Naive thymus-derived CD4-positive, alpha-beta T cell (primary cell): ENCODE measurements at regions of chr19 and their contacts with region 1.

Region 1: GRCh38 chr19:1863726-1864480 is 524 bp upstream of the KLF16 start:
- DNase-seq: peak; percentile 89 to 96 (median 94)
- ATAC-seq: peak; percentile 84
- H3K4me3 ChIP-seq: peak overlapping the region; percentile 79
- H3K4me3 Mint-ChIP-seq: peak overlapping the region; percentile 38 to 82 (median 73)
- H3K27ac ChIP-seq: peak overlapping the region; percentile 78
- H3K27ac Mint-ChIP-seq: peak overlapping the region; percentile 15 to 86 (median 76)
- H3K4me1 ChIP-seq: peaks cover 13 to 32% of the 10 kb centered on the region in 2 donors
- H3K4me1 Mint-ChIP-seq: peaks cover 6 to 46% (median 32%) of the 10 kb centered on the region in 7 donors
- H3K27me3 ChIP-seq: no peaks in the 10 kb centered on the region
- H3K27me3 Mint-ChIP-seq: no peaks in the 10 kb centered on the region

Region 2: DNA sequence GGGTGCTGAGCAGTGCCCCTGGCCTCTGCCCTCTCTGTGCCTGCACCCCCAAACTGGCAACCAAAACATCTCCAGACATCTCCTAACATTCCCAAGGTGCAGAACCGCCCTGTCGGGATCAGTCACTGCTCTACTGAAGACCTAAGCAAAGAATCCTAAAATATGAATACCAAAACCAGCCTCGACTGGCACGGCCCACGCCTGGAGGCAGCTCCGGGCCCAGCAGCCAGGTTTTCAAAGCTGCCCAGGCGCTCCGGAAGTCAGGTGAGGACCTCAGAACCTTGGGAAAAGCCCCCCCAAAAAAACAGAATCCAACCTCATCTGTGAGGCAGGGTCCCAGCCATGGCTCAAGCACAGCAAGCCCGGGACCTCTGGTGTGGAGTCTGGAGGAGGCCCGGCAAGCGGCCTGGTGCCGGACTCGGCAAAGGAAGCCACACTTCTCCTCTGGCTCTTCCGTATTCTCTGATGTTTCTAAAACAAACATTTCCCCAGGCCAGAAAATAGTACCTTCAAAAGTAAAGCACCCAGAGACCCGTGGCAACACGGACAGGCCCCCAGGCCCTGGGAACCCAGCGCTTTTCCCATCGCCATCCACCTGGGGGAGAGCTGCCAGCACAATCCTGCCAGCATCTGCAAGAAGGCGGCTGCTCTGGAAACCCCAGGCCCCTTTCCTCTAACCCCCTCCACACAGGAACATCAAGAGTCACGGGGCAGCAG is 21.4 kb before region 1 on chr19:
- CTCF ChIA-PET with region 1: no interaction called
- POLR2A ChIA-PET with region 1: no interaction called
- intact Hi-C with region 1: no loop called
- DNase-seq: no peak
- ATAC-seq: no peak
- H3K4me3 ChIP-seq: no peak overlapping the region
- H3K4me3 Mint-ChIP-seq: peak overlapping the region in 5 of 10 donors; percentile 18 to 62 (median 41)
- H3K27ac ChIP-seq: no peak overlapping the region
- H3K27ac Mint-ChIP-seq: peak overlapping the region in 3 of 9 donors; percentile 34 to 48 (median 41)
- H3K4me1 ChIP-seq: peaks cover 21 to 43% of the 10 kb centered on the region in 2 donors
- H3K4me1 Mint-ChIP-seq: peaks cover 35 to 80% (median 59%) of the 10 kb centered on the region in 7 donors
- H3K27me3 ChIP-seq: no peaks in the 10 kb centered on the region
- H3K27me3 Mint-ChIP-seq: no peaks in the 10 kb centered on the region

Region 3: DNA sequence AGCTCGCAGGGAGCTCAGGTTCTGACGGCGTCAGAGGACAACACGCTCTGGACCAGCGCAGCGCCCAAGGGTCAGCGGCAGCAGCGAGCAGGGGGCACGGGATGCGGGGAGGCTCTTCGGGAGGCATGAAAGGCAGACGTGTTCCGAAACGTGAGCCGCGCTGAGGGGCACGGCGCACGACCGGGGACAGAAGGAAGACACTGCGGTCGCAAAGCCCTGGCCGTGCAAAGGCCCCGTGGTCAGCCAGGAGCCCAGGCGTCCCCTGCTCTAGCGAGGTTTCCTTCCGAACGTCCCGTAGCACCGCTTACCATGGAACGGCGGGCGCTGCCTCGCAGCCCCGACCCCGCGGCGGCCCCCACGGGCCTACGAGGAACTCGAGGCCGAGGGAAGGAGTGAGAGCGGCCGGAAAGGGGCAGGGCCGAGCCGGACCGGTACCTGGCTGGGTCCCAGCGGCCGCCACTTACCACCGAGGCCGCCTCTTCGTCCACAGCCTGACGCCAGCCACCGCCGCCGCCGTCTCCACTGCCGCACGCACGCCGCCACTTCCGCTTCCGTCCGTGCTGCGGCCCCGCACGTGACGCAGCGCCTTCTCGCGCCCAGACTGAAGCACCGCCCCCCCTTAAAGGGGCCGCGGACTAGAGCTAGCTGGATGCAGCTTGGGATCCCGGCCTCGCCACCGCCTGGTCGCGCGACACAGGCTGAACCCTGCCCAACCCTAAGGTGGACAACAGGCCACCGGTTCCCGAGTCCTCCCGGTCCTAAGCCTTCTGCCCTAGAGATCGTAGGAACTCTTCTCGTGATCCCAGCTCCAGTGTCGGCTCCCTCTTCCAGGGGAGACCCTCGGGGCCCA is 12.0 kb after region 1 on chr19:
- CTCF ChIA-PET with region 1: interaction called, 3 read pairs
- POLR2A ChIA-PET with region 1: interaction called, 40 read pairs
- intact Hi-C with region 1: loop called (anchors 1 kb)
- DNase-seq: peak; percentile 75 to 92 (median 85)
- ATAC-seq: peak; percentile 95
- H3K4me3 ChIP-seq: peak overlapping the region; percentile 83
- H3K4me3 Mint-ChIP-seq: peak overlapping the region; percentile 95 to 100 (median 98)
- H3K27ac ChIP-seq: peak overlapping the region; percentile 98
- H3K27ac Mint-ChIP-seq: peak overlapping the region; percentile 93 to 99 (median 98)
- H3K4me1 ChIP-seq: peaks cover 27 to 31% of the 10 kb centered on the region in 2 donors
- H3K4me1 Mint-ChIP-seq: peaks cover 9 to 41% (median 21%) of the 10 kb centered on the region in 7 donors
- H3K27me3 ChIP-seq: no peaks in the 10 kb centered on the region
- H3K27me3 Mint-ChIP-seq: peaks cover 0 to 2% (median 0%) of the 10 kb centered on the region in 5 donors

Region 4: GRCh38 chr19:1896508-1896907 is 32.6 kb after region 1 on chr19:
- CTCF ChIA-PET with region 1: interaction called, 8 read pairs
- POLR2A ChIA-PET with region 1: interaction called, 3 read pairs
- intact Hi-C with region 1: loop called in 1 of 2 experiments (anchors 2 kb)
- DNase-seq: no peak
- ATAC-seq: no peak
- H3K4me3 ChIP-seq: peak overlapping the region; percentile 13
- H3K4me3 Mint-ChIP-seq: peak overlapping the region; percentile 82 to 93 (median 88)
- H3K27ac ChIP-seq: peak overlapping the region; percentile 65
- H3K27ac Mint-ChIP-seq: peak overlapping the region in 7 of 9 donors; percentile 70 to 99 (median 97)
- H3K4me1 ChIP-seq: peaks cover 16 to 29% of the 10 kb centered on the region in 2 donors
- H3K4me1 Mint-ChIP-seq: peaks cover 10 to 46% (median 32%) of the 10 kb centered on the region in 7 donors
- H3K27me3 ChIP-seq: no peaks in the 10 kb centered on the region
- H3K27me3 Mint-ChIP-seq: no peaks in the 10 kb centered on the region

Region 5: GRCh38 chr19:1929021-1929742 is 65.3 kb after region 1 on chr19:
- CTCF ChIA-PET with region 1: no interaction called
- POLR2A ChIA-PET with region 1: no interaction called
- intact Hi-C with region 1: loop called in 1 of 2 experiments (anchors 1 kb)
- DNase-seq: peak; percentile 65 to 86 (median 76)
- ATAC-seq: peak; percentile 93
- H3K4me3 ChIP-seq: peak overlapping the region; percentile 36
- H3K4me3 Mint-ChIP-seq: peak overlapping the region; percentile 71 to 85 (median 80)
- H3K27ac ChIP-seq: peak overlapping the region; percentile 45
- H3K27ac Mint-ChIP-seq: peak overlapping the region in 7 of 9 donors; percentile 23 to 80 (median 32)
- H3K4me1 ChIP-seq: peaks cover 8 to 9% of the 10 kb centered on the region in 2 donors
- H3K4me1 Mint-ChIP-seq: peaks cover 6 to 27% (median 22%) of the 10 kb centered on the region in 7 donors
- H3K27me3 ChIP-seq: no peaks in the 10 kb centered on the region
- H3K27me3 Mint-ChIP-seq: no peaks in the 10 kb centered on the region

Region 6: GRCh38 chr19:1992759-1993260 is 128.9 kb after region 1 on chr19:
- CTCF ChIA-PET with region 1: no interaction called
- POLR2A ChIA-PET with region 1: no interaction called
- intact Hi-C with region 1: no loop called
- DNase-seq: no peak
- ATAC-seq: no peak
- H3K4me3 ChIP-seq: no peak overlapping the region
- H3K4me3 Mint-ChIP-seq: no peak overlapping the region
- H3K27ac ChIP-seq: no peak overlapping the region
- H3K27ac Mint-ChIP-seq: no peak overlapping the region
- H3K4me1 ChIP-seq: no peaks in the 10 kb centered on the region
- H3K4me1 Mint-ChIP-seq: peaks cover 0 to 4% (median 0%) of the 10 kb centered on the region in 7 donors
- H3K27me3 ChIP-seq: no peaks in the 10 kb centered on the region
- H3K27me3 Mint-ChIP-seq: no peaks in the 10 kb centered on the region

Region 7: GRCh38 chr19:2061495-2062381 is 197.8 kb after region 1 on chr19:
- CTCF ChIA-PET with region 1: no interaction called
- POLR2A ChIA-PET with region 1: no interaction called
- intact Hi-C with region 1: loop called in 1 of 2 experiments (anchors 5 kb)
- DNase-seq: peak; percentile 99 to 100 (median 100)
- ATAC-seq: peak; percentile 94
- H3K4me3 ChIP-seq: peak overlapping the region; percentile 72
- H3K4me3 Mint-ChIP-seq: peak overlapping the region; percentile 91 to 97 (median 94)
- H3K27ac ChIP-seq: peak overlapping the region; percentile 99
- H3K27ac Mint-ChIP-seq: peak overlapping the region; percentile 85 to 99 (median 97)
- H3K4me1 ChIP-seq: peaks cover 32 to 49% of the 10 kb centered on the region in 2 donors
- H3K4me1 Mint-ChIP-seq: peaks cover 20 to 60% (median 24%) of the 10 kb centered on the region in 7 donors
- H3K27me3 ChIP-seq: no peaks in the 10 kb centered on the region
- H3K27me3 Mint-ChIP-seq: no peaks in the 10 kb centered on the region